ENCODE measurements at regions of chr6 and their contacts with region 1.

Region 1: GRCh38 chr6:68200929-68201328 is 434.2 kb upstream of the ADGRB3 start:
- DNase-seq: no peak
- H3K4me3 Mint-ChIP-seq: no peak overlapping the region
- H3K27ac Mint-ChIP-seq: no peak overlapping the region
- H3K4me1 Mint-ChIP-seq: no peaks in the 10 kb centered on the region
- H3K27me3 Mint-ChIP-seq: no peaks in the 10 kb centered on the region

Region 2: DNA sequence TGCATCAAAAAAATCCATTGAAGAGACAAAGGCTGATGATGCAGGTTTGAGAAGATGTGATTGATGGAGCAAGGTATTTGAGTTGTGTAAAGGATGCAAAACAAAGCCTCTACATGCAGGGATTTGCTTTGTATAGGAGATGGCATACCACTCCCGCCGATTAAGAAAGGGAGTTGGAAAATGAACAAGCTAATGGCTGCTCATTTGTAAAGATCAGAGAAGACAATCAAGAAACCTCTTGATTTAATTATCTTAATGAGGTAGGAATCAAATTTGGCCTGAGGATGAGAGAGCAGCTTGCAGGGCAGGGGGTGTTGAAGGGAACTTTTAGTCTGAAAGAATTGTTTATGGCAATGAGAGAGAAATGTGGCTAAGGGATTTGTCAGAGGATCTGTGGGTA is 14.1 kb before region 1 on chr6:
- CTCF ChIA-PET with region 1: no interaction called
- intact Hi-C with region 1: loop called (anchors 1 kb)
- DNase-seq: no peak
- H3K4me3 Mint-ChIP-seq: no peak overlapping the region
- H3K27ac Mint-ChIP-seq: no peak overlapping the region
- H3K4me1 Mint-ChIP-seq: no peaks in the 10 kb centered on the region
- H3K27me3 Mint-ChIP-seq: no peaks in the 10 kb centered on the region

Measured in activated naive CD4-positive, alpha-beta T cell treated with anti-CD3 and anti-CD28 coated beads for 36 hours (primary cell).